Activated CD8-positive, alpha-beta memory T cell treated with anti-CD3 and anti-CD28 coated beads, Interleukin-2, amount 10 ng/mL, durations not matched to agents 7 days and 5 days (primary cell): ENCODE measurements at regions of chr3 and their contacts with region 1.

Region 1: GRCh38 chr3:36957862-36958686 is 13.2 kb upstream of the TRANK1 start:
- DNase-seq: no peak
- ATAC-seq: no peak
- H3K4me3 Mint-ChIP-seq: no peak overlapping the region
- H3K27ac Mint-ChIP-seq: no peak overlapping the region
- H3K4me1 Mint-ChIP-seq: peaks cover 12% of the 10 kb centered on the region
- H3K27me3 Mint-ChIP-seq: no peaks in the 10 kb centered on the region

Region 2: DNA sequence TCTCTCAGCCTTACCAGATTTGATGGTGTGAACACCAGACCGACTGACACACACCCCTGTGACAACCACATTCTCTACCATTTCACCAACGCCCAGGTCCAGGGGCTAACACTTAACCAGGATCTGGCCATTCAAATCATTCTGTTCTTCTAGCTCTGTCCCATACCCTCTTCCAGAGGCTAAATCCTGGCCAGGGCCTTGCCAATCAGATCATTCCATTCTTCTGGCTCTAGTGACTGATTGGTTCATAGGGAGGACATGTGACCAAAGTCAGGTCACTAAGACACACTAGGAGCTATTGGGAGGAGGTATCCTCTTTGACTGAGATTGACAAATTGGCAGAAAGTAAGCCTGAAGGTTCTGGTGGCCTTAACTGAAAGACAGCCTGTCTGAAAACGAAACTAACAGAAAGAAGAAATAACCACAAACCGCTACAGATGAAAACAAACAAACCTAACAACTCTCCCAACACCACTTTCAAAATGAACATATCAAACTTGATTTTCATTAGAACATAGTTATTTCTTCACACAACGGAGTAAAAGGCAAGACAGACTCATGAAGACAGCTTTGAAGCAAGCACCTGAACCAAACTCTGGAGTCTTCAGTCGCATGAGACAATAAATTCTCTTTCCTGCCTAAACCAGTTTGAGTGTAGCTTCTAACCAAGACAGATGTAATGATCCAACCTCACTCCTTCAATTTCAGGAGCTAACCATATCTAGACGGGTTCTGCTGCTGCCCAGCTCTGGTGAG is 81.7 kb before region 1 on chr3:
- CTCF ChIA-PET with region 1: interaction called, 16 read pairs
- DNase-seq: peak; percentile 61
- ATAC-seq: peak; percentile 96
- H3K4me3 Mint-ChIP-seq: peak overlapping the region; percentile 49
- H3K27ac Mint-ChIP-seq: peak overlapping the region; percentile 92
- H3K4me1 Mint-ChIP-seq: peaks cover 31% of the 10 kb centered on the region
- H3K27me3 Mint-ChIP-seq: no peaks in the 10 kb centered on the region

Region 3: GRCh38 chr3:36923523-36923943 is 34.5 kb before region 1 on chr3:
- CTCF ChIA-PET with region 1: interaction called, 13 read pairs
- DNase-seq: no peak
- ATAC-seq: no peak
- H3K4me3 Mint-ChIP-seq: no peak overlapping the region
- H3K27ac Mint-ChIP-seq: no peak overlapping the region
- H3K4me1 Mint-ChIP-seq: peaks cover 5% of the 10 kb centered on the region
- H3K27me3 Mint-ChIP-seq: no peaks in the 10 kb centered on the region

Region 4: GRCh38 chr3:36969540-36970432 is 11.7 kb after region 1 on chr3:
- CTCF ChIA-PET with region 1: interaction called, 11 read pairs
- DNase-seq: peak; percentile 62
- ATAC-seq: peak; percentile 94
- H3K4me3 Mint-ChIP-seq: no peak overlapping the region
- H3K27ac Mint-ChIP-seq: no peak overlapping the region
- H3K4me1 Mint-ChIP-seq: peaks cover 27% of the 10 kb centered on the region
- H3K27me3 Mint-ChIP-seq: no peaks in the 10 kb centered on the region